HEK293 (cell line): ENCODE measurements at regions of chr5 and their contacts with region 1.

Region 1: DNA sequence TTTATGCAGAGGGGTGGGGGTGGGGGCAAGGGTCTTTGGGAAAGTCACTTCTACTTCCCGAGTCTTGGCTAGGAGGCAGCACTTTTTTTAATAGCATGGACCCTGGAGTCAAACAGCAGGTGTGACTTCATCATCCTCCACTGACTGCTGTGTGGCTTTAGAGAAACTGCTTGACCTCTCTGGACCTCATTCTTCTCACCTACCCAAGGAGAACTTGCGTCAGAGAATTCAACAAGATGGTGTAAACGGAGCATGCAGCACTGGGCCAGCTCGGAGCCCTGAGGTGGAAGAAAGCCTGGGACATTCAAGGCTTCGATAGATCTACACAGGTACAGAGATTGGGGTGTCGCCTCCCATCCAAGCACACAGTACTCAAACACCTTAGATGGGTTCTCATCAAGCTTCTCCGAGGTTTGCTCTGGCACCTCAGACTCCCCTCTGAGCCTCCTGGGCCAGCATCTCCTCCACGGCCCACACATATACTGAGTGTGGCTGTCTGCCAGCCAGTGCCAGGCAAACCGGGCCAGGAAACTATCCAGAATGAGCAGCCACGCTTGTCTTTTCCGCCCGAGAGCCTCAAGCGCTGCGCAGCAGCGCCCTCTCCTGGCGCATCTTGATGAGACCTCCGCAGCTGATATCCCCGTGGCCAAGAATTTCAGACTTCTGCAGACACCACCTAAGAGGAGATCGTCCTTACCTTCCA is 4.6 kb upstream of the SLC25A48 start:
- H3K4me3 ChIP-seq: no peak overlapping the region
- H3K27ac ChIP-seq: no peak overlapping the region
- H3K4me1 ChIP-seq: no peaks in the 10 kb centered on the region
- CTCF ChIP-seq: peak; percentile 76

Region 2: GRCh38 chr5:135814315-135814714 is 15.5 kb before region 1 on chr5:
- CTCF ChIA-PET with region 1: interaction called, 15 read pairs
- POLR2A ChIA-PET with region 1: no interaction called
- H3K4me3 ChIP-seq: no peak overlapping the region
- H3K27ac ChIP-seq: no peak overlapping the region
- H3K4me1 ChIP-seq: no peaks in the 10 kb centered on the region
- CTCF ChIP-seq: no peak

Region 3: DNA sequence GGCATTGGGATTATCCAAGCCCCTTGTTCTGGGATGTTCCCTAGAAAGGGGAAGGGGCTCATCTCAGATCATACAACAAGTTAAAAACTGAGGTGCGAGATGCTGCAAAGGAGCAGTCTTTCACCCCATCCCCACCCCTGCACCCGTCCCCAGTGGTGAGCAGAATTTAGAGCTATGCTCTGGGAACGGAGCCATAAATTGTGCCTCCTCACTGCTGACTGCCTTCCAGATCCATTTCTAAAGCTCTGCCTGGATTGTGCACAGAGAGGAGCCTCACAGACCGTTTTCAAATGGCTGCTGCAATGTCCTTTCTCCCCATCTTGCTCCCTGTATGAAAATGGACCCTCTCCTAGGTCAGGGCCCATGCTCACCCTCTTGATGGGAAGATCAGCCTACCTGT is 12.9 kb after region 1 on chr5:
- CTCF ChIA-PET with region 1: interaction called, 11 read pairs
- POLR2A ChIA-PET with region 1: no interaction called
- H3K4me3 ChIP-seq: no peak overlapping the region
- H3K27ac ChIP-seq: no peak overlapping the region
- H3K4me1 ChIP-seq: no peaks in the 10 kb centered on the region
- CTCF ChIP-seq: no peak

Region 4: GRCh38 chr5:135973323-135974020 is 143.6 kb after region 1 on chr5:
- CTCF ChIA-PET with region 1: no interaction called
- POLR2A ChIA-PET with region 1: no interaction called
- H3K4me3 ChIP-seq: no peak overlapping the region
- H3K27ac ChIP-seq: no peak overlapping the region
- H3K4me1 ChIP-seq: no peaks in the 10 kb centered on the region
- CTCF ChIP-seq: no peak